ENCODE measurements at regions of chr6 and their contacts with region 1.

Region 1: DNA sequence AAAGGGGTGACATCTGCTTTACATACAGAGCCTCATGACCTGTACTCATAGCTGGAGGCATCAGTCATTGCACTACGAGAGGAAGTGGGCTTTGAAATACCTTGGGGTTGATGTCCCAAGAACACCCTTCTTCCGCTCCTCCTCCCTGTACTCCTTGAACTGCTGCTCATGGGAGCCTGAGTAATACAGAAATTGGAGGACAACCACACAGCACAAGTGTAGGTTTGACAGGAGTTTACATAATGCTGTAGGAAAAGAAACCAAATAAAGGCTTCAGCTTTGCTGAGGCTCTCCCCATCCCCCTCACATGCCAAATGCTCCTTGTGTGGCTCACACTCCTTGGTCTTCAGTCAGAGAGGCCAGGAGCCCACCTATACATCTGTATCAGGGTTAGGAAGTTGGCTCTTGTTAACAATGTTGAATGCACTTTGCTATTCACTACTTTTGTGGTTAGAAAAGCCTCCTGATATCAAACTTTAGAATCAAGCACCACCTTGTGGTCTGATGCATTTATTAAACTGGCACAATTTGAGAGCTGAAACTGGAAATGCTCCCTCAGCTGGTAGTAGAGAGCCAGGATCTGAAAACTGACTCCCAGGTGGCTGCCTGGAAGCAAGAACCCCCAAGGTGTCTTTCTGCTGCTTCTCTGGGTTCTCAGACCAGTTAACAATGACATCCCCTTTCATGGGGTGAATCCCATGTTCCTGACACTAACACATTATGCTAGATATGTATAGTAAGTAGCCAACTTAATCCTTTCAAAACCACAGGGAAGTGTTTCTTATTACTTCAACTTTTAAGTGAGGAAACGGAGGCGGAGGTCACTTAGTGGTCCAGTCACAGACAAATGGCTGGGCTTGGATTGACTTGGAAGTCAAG is 56.2 kb upstream of the EDN1 start:
- DNase-seq: no peak

Region 2: GRCh38 chr6:11585426-11586016 is 648.4 kb before region 1 on chr6:
- intact Hi-C with region 1: loop called (anchors 5 to 10 kb)
- DNase-seq: no peak

Region 3: GRCh38 chr6:11609315-11610071 is 624.4 kb before region 1 on chr6:
- intact Hi-C with region 1: no loop called
- DNase-seq: no peak

Region 4: DNA sequence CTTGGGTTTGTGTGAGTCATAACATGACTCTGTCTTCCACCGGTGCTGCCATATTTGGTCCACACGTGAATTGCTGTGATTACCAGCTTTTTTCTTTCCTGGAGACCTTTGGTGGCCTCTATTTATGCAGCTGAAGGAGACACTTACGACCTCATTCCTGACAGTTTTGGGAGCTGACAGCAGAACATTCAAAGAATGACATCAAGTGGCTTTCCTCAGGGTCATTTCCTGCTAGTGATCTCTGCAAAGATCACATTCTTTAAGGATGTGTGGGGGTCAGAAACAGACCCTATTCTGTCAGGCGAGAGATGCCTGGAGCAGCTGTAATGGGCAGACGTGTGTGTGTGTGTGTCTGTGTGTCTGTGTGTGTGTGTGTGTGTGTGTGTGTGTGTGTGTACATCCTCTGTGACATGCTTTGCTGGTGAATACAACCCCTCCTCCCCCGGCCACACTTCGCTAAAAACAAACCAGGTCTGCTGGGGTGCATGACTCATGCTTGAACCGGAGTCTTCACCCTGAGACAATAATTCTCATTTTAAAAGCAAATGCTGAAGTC is 580.8 kb before region 1 on chr6:
- intact Hi-C with region 1: loop called in 1 of 2 experiments (anchors 10 kb)
- DNase-seq: no peak

Region 5: GRCh38 chr6:12081771-12082170 is 152.2 kb before region 1 on chr6:
- intact Hi-C with region 1: no loop called
- DNase-seq: no peak

Region 6: DNA sequence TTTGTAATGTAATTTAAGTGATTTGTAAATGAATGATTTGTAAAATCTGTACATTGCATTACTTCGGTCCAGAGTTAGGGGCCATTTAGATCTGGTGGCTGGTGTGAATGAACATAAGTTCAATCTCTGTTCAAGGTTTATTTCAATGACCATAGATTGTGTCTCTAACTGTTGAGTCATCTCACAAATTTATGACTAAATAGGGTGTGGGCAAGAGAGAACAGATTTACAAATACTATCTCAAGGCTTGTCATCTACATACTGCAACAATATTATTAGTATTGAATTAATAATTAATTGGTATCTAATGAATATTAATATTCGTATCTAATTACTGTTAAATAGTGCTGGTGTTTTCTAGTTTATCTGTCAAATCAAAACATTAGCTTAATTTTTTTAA is 59.1 kb before region 1 on chr6:
- intact Hi-C with region 1: no loop called
- DNase-seq: no peak